Mammary epithelial cell (primary cell): ENCODE measurements at regions of chr19 and their contacts with region 1.

Region 1: DNA sequence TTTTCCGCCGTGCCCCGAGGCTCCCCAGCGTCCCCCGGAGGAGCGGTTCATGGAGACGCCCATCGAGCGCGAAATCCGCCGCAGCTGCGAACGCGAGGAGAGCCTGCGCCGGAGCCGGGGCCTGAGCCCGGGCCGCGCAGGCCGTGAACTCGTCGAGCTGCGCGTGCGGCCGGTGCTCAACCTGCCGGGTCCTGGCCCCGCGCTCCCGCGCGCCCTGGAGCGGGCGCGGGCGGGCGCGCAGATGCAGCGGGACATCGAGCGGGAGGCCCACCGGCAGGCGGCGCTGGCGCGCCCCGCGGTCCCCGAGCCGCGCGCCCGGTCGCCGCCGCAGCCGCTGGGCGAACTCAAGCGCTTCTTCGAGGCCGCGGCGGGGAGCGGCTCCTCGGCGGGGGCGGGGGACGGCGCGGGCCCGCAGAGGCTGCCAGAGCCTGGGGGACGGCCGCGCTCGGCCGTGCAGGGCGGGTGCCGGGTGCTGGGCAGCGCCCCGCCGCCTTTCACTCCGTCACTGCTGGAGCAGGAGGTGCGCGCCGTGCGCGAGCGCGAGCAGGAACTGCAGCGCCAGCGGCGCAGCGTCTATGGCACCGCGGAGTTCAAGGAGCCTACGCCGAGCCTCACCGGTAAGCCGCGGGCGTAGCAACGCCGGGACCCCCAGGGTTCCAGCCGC is 807 bp downstream of the MISP3 start:
- DNase-seq: peak; percentile 74
- H3K4me3 ChIP-seq: peak overlapping the region; percentile 48 to 84 (median 49)
- H3K27ac ChIP-seq: peak overlapping the region; percentile 29
- H3K4me1 ChIP-seq: peaks cover 26% of the 10 kb centered on the region
- H3K27me3 ChIP-seq: no peaks in the 10 kb centered on the region
- CTCF ChIP-seq: peak in 1 of 2 donors; percentile 38

Region 2: GRCh38 chr19:13597640-13598039 is 475.8 kb before region 1 on chr19:
- CTCF ChIA-PET with region 1: no interaction called
- dilution Hi-C with region 1: no loop called
- in situ Hi-C with region 1: no loop called
- intact Hi-C with region 1: loop called (anchors 2 kb)
- DNase-seq: peak; percentile 50
- H3K4me3 ChIP-seq: no peak overlapping the region
- H3K27ac ChIP-seq: no peak overlapping the region
- H3K4me1 ChIP-seq: no peaks in the 10 kb centered on the region
- H3K27me3 ChIP-seq: no peaks in the 10 kb centered on the region
- CTCF ChIP-seq: peak; percentile 44 to 69

Region 3: DNA sequence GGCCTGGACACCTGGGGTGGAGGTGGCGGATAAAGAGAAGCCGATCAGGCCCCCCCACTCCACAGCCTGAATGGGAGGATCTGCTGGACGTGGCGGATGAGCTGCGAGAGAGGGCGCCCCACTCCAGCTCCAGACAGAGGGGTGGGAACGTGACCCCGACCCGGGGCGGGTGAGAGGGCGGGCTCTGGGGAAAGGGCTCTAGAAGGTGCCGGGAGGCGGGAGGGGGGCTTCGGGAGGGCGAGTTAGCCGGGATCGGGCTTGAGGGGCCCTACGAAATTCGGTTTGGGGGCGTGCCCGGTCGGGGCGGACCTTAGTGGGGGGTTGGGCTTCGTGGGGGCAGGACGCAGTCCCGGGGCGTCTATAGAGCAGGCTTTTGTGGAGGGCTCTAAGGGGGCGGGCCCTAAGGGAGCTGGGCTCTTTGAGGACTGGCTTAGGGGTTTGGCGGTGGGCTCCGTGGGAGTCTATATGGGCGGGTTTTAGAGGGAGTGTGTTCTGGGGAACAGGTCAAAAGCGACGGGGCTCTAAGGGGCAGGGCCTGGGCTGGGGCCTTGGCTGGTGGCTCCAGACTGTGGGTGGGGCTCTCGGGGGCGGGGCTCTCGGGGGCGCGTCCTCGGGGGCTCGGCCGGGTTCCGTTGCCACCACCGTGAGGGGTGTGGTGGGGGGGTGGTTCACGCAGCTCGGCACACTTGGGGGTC is 200.6 kb before region 1 on chr19:
- CTCF ChIA-PET with region 1: no interaction called
- dilution Hi-C with region 1: no loop called
- in situ Hi-C with region 1: loop called in 1 of 2 experiments (anchors 10 kb)
- intact Hi-C with region 1: no loop called
- DNase-seq: no peak
- H3K4me3 ChIP-seq: peak overlapping the region in 1 of 3 experiments; percentile 2
- H3K27ac ChIP-seq: no peak overlapping the region
- H3K4me1 ChIP-seq: no peaks in the 10 kb centered on the region
- H3K27me3 ChIP-seq: no peaks in the 10 kb centered on the region
- CTCF ChIP-seq: peak in 1 of 2 donors; percentile 5

Region 4: DNA sequence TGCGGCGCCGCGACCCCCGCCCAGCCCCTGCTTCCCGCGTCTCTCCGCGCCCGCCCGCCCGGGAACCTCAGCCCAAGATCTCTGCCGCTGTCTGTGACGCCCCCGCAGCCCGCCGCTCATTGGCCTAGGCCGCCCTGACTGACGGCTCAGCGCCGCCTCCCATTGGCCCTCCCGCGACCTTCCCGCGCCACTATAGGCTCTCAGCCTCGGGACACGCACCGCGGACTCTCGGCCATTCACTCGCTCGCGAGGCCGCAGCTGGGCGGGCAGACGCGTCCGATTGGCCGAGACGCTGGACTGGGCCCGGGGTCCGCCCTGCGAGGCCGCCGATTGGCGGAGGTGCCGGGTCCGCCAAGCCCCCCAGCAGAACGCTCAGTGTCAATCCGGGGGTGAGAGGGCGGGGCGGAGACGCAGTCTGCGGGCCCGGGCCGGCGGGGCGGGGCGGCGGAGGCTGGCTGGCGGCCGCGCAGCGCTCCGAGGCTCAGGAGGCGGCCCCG is 44.3 kb after region 1 on chr19 and contains the start of gene PRKACA:
- CTCF ChIA-PET with region 1: interaction called, 4 read pairs
- dilution Hi-C with region 1: no loop called
- in situ Hi-C with region 1: no loop called
- intact Hi-C with region 1: loop called (anchors 1 kb)
- DNase-seq: peak; percentile 100
- H3K4me3 ChIP-seq: peak within 1 kb of the TSS; percentile 83 to 87 (median 87)
- H3K27ac ChIP-seq: peak within 1 kb of the TSS; percentile 27
- H3K4me1 ChIP-seq: peaks cover 36% of the 10 kb centered on the region
- H3K27me3 ChIP-seq: no peaks in the 10 kb centered on the region
- CTCF ChIP-seq: no peak
- total RNA-seq, gene PRKACA: 44.0 to 82.1 TPM